ENCODE measurements at regions of chr6 and their contacts with region 1.

Region 1: DNA sequence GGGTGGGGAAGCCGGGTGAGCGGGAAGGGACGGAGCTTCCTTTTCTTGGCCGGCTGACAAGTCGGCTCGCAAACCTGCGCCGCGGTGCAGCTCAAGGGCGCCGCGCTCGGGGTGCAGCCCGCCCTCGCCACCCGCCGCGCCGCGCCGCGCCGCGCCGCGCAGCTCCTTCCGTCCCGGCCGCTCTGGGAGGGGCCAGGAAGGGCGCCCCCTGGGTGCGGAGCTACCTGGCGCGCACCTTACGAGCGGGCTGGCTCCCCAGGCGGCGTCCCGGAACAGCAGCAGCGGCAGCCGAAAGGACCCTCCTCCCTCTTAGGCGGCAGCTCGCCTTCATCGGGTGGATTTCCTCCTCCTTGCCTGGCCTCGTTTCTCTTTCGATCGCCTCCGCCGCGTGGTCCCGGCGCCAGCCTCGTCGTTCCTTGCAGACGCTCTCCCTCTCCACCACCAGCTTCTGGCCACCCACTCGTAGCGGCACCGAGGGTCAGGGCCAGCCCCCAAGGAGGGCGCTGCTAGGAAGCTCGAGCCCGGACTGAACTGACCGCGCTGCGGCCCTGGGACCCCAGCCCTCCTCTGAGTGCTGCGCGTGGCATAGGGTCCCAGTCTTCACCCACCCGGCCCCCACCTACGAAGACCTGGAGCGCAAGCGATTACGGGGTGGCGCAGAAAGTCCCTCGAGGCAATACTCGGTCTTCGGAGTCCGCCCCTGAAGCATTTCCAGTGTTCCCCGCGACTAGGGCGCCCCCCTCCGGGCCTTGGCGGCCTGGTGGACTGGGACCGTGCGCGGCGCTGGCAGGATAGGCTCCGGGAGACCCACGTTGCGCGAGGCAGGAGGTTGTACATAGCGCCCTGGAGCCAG is at the start of gene MAP3K5:
- DNase-seq: peak; percentile 91
- ATAC-seq: peak; percentile 74
- H3K4me3 Mint-ChIP-seq: peak within 1 kb of the TSS; percentile 97
- H3K27ac Mint-ChIP-seq: peak within 1 kb of the TSS; percentile 96
- H3K4me1 Mint-ChIP-seq: peaks cover 42% of the 10 kb centered on the region
- H3K27me3 Mint-ChIP-seq: no peaks in the 10 kb centered on the region
- CTCF ChIP-seq: no peak
- total RNA-seq, gene MAP3K5: 21.6 and 24.4 TPM in 2 replicates

Region 2: DNA sequence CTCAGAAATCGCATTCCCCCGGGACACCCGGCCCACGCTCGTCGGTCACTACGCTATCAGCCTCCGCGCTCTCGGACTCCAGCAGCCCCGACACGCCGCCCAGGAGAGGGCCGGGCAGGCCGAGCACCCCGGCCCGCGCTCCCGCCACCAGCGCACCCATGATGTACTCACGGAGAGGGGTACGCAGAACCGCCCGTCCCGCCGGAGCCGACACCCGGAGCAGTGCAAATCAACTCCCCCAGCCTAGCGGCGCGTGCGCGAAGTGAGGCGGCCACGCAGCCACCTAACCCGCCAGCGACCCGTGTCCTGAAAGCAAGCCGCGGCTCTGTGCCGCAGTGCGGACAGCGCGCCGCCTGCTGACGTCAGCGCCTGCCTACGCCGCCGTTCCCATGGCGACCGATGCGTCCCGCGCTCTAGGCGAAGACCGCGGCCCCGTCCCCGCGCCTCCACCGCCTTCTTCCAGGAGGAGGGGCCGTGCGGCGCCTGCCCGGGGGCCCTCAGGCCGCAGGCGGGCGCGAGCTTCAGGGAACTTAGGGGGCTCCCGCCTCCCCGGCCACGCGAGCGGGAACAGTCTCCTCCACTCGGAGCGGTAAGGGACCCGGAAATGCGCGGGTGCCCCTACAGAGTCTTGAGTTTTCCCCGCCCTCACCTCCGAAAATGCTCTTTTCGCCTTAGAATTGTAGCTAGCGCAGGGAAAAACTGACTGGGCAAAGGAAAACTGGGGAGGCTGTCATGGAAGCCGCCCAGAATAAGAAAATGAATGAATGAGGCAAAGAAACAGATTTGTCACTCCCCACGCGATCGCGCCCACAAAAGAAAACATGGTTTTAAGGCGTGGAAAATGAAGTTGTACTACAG is 1295.0 kb before region 1 on chr6 and contains the start of gene AHI1:
- CTCF ChIA-PET with region 1: interaction called, 3 read pairs
- POLR2A ChIA-PET with region 1: no interaction called
- intact Hi-C with region 1: loop called (anchors 5 kb)
- DNase-seq: peak; percentile 95
- ATAC-seq: peak; percentile 91
- H3K4me3 Mint-ChIP-seq: no peak within 1 kb of the TSS
- H3K27ac Mint-ChIP-seq: no peak within 1 kb of the TSS
- H3K4me1 Mint-ChIP-seq: peaks cover 8% of the 10 kb centered on the region
- H3K27me3 Mint-ChIP-seq: no peaks in the 10 kb centered on the region
- CTCF ChIP-seq: no peak
- total RNA-seq, gene AHI1: 18.2 and 21.0 TPM in 2 replicates

Region 3: DNA sequence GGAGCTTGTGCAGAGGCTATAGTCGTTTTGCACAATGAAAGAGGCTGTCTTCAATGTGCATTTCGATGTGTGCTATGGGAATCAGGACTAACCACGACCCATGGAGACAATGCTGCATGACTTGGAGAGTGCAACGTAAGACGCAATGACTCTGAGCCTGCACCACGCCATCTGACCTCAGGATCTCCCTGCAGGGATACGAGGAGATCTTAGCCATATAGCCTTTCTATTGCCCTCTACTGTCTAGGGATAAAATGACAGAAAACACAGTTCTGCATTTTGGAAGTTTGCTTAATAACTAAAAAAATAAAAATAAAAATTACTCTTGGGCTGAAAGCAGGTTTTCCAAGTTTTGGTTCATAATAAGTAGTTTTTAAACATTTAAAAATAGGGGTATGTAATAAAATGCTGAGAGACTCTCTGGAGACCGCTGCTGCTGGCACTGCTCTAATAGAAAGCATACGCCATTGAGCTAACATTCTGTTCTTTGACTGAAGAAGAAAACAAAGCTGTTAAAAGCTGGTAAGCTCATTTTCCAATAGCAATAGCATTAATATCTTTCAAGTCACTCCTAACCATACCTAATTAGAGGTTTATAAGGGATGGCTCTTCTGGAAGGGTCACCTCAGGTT is 853.9 kb before region 1 on chr6:
- CTCF ChIA-PET with region 1: no interaction called
- POLR2A ChIA-PET with region 1: no interaction called
- intact Hi-C with region 1: no loop called
- DNase-seq: no peak
- ATAC-seq: no peak
- H3K4me3 Mint-ChIP-seq: no peak overlapping the region
- H3K27ac Mint-ChIP-seq: no peak overlapping the region
- H3K4me1 Mint-ChIP-seq: no peaks in the 10 kb centered on the region
- H3K27me3 Mint-ChIP-seq: no peaks in the 10 kb centered on the region
- CTCF ChIP-seq: no peak

Region 4: DNA sequence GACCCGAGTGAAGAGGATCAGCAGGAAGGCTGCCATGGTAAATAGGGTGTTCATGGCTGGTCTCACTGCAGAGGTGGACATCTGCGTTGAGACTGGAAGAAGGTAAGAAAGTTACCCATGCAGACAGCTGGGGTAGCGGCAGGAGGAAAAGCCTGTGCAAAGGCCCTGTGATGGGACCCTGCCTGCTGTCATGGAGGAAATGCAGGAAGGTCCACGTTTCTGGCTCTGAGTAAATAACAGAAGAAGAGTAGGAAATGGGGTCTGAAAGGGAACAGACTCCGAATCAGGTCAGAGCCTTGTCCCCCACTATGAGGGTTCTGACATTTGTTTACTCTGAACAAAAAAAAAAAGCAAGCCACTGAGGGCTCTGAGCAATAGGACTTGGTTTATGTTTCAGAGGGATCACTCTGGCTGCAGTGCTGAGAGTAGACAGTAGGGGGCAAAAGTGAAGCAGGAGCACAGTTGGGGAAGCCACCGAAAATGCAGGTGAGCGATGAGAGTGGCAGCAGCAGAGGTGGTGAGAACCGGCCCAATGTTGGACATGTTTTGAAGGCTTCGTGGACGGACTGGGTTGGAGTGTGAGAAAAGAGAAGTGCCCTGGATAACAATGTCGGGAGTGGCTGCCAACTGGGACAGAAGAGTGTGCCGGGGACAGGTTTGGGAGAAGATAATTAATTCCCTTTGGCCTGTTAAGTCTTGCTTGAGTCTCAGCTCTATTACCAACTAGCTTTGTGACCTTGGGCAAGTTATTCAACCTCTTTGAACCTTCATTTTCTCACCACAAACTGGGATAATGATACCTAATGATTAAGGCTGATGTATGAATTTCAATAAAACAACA is 184.5 kb before region 1 on chr6:
- CTCF ChIA-PET with region 1: interaction called, 13 read pairs
- POLR2A ChIA-PET with region 1: no interaction called
- intact Hi-C with region 1: loop called (anchors 1 kb)
- DNase-seq: peak; percentile 53
- ATAC-seq: peak; percentile 99
- H3K4me3 Mint-ChIP-seq: no peak overlapping the region
- H3K27ac Mint-ChIP-seq: no peak overlapping the region
- H3K4me1 Mint-ChIP-seq: peaks cover 3% of the 10 kb centered on the region
- H3K27me3 Mint-ChIP-seq: no peaks in the 10 kb centered on the region
- CTCF ChIP-seq: peak; percentile 63

Region 5: GRCh38 chr6:136696238-136696637 is 96.4 kb before region 1 on chr6:
- CTCF ChIA-PET with region 1: interaction called, 13 read pairs
- POLR2A ChIA-PET with region 1: interaction called, 5 read pairs
- intact Hi-C with region 1: loop called (anchors 2 kb)
- DNase-seq: no peak
- ATAC-seq: no peak
- H3K4me3 Mint-ChIP-seq: no peak overlapping the region
- H3K27ac Mint-ChIP-seq: no peak overlapping the region
- H3K4me1 Mint-ChIP-seq: no peaks in the 10 kb centered on the region
- H3K27me3 Mint-ChIP-seq: no peaks in the 10 kb centered on the region
- CTCF ChIP-seq: no peak

Region 6: GRCh38 chr6:136728976-136729515 is 63.6 kb before region 1 on chr6:
- CTCF ChIA-PET with region 1: interaction called, 15 read pairs
- POLR2A ChIA-PET with region 1: interaction called, 28 read pairs
- intact Hi-C with region 1: loop called (anchors 1 kb)
- DNase-seq: no peak
- ATAC-seq: no peak
- H3K4me3 Mint-ChIP-seq: no peak overlapping the region
- H3K27ac Mint-ChIP-seq: no peak overlapping the region
- H3K4me1 Mint-ChIP-seq: peaks cover 52% of the 10 kb centered on the region
- H3K27me3 Mint-ChIP-seq: no peaks in the 10 kb centered on the region
- CTCF ChIP-seq: no peak

Region 7: DNA sequence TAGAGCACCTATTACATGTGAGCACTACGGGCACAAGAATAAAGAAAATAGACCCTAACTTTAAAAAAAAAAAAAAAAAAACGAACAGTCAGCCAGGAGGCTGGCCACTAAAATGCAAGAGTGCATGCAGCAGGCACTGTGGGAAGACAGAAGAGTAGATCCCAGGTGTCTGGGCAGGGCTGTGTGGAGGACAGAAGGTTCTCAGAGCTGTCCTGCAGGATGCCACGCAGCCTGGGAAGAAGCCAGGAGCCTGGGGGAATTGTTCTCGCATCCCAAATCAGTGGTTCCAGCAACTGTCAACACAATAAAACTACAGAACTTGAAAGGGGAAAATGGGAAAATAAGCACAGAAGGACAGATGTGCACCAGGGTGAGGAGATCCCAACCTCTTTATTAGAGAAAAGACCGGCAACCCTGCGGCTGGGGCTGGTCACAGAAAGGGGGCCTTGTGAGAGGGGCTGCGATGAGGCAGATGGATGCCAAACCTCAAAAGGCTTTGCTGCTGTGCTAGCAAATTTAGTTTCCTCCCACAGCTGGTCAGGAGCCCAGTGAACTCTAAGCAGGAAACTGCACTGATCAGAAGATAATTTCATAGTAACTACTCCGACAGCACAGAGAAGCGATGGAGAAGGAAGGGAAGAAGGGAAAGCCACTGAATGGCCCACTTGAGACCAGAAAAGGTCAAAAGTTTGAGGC is 31.3 kb before region 1 on chr6:
- CTCF ChIA-PET with region 1: interaction called, 49 read pairs
- POLR2A ChIA-PET with region 1: interaction called, 96 read pairs
- intact Hi-C with region 1: loop called (anchors 1 kb)
- DNase-seq: no peak
- ATAC-seq: peak; percentile 26
- H3K4me3 Mint-ChIP-seq: peak overlapping the region; percentile 73
- H3K27ac Mint-ChIP-seq: peak overlapping the region; percentile 84
- H3K4me1 Mint-ChIP-seq: peaks cover 67% of the 10 kb centered on the region
- H3K27me3 Mint-ChIP-seq: no peaks in the 10 kb centered on the region
- CTCF ChIP-seq: no peak

Region 8: DNA sequence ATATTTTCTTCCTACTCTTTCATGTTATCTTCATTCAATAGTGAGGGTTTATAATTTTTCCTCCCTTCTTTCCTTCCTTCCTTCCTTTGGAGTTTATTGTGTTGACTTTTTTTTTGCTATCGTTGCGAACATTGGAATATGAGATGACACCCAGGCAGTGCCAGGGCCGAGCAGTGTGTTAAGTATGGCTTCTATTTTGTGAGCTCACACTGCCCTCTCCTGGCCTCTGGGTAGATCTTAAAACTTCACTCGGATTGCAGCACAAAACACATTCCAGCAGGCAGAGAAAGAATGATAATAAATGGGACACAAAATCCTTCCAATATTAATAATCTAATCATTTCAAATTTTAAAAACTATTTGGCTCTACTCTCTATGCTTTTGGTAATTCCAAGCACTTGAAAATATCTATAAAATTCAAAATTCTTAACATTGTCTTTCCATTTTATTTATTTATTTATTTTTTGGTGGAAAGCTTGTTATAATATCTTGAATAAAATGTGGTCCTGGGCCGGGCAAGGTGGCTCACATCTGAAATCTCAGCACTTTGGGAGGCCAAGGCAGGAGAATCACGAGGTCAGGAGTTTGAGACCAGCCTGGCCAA is 848.9 kb after region 1 on chr6:
- CTCF ChIA-PET with region 1: no interaction called
- POLR2A ChIA-PET with region 1: no interaction called
- intact Hi-C with region 1: loop called (anchors 2 kb)
- DNase-seq: peak; percentile 20
- ATAC-seq: peak; percentile 83
- H3K4me3 Mint-ChIP-seq: no peak overlapping the region
- H3K27ac Mint-ChIP-seq: no peak overlapping the region
- H3K4me1 Mint-ChIP-seq: peaks cover 12% of the 10 kb centered on the region
- H3K27me3 Mint-ChIP-seq: peaks cover 1% of the 10 kb centered on the region
- CTCF ChIP-seq: peak; percentile 58